Heart right ventricle (tissue), 16 donors: ENCODE measurements at regions of chr17 and their contacts with region 1.

Region 1: GRCh38 chr17:72120642-72121163 is at the start of gene SOX9:
- DNase-seq: peak; percentile 84 to 91
- ATAC-seq: peak; percentile 87 to 96 (median 91)
- H3K4me3 ChIP-seq: peak within 1 kb of the TSS; percentile 54 to 85 (median 72)
- H3K27ac ChIP-seq: peak within 1 kb of the TSS; percentile 77 to 94 (median 90)
- H3K4me1 ChIP-seq: peaks cover 3 to 54% (median 38%) of the 10 kb centered on the region in 9 donors
- H3K27me3 ChIP-seq: peaks cover 0 to 97% (median 80%) of the 10 kb centered on the region in 7 donors
- CTCF ChIP-seq: no peak
- total RNA-seq, gene SOX9: 7.9 to 25.7 (median 12.8) TPM

Region 2: DNA sequence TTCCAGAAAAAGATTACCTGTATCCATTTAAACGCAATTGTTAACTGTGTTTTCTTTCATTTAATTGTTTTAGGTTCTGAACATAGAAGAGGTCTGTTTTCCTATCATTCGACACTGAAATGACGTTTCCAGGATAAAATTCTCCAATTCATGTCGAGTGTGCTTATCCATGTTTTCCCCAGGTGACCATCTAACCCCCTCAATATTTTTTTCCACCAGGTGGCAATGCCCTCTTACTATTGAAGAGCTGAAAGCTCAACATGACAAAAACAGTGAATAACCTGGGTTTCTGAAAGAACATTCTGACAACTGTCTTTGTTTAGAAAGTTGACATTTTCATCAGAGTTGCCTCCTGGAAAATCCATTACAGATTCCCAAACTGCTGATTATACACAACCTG is 1002.7 kb before region 1 on chr17:
- intact Hi-C with region 1: loop called in 1 of 10 experiments (anchors 5 kb)
- DNase-seq: no peak
- ATAC-seq: no peak
- H3K4me3 ChIP-seq: no peak overlapping the region
- H3K27ac ChIP-seq: no peak overlapping the region
- H3K4me1 ChIP-seq: no peaks in the 10 kb centered on the region
- H3K27me3 ChIP-seq: peaks cover 0 to 5% (median 0%) of the 10 kb centered on the region in 7 donors
- CTCF ChIP-seq: peak; percentile 15 to 56 (median 45)

Region 3: GRCh38 chr17:71472809-71473789 is 647.6 kb before region 1 on chr17:
- intact Hi-C with region 1: loop called in 8 of 10 experiments (anchors 2 to 10 kb)
- DNase-seq: peak in 1 of 2 donors; percentile 6
- ATAC-seq: peak in 3 of 8 donors; percentile 34 to 78 (median 35)
- H3K4me3 ChIP-seq: no peak overlapping the region
- H3K27ac ChIP-seq: no peak overlapping the region
- H3K4me1 ChIP-seq: no peaks in the 10 kb centered on the region
- H3K27me3 ChIP-seq: peaks cover 0 to 13% (median 0%) of the 10 kb centered on the region in 7 donors
- CTCF ChIP-seq: peak; percentile 30 to 65 (median 56)

Region 4: DNA sequence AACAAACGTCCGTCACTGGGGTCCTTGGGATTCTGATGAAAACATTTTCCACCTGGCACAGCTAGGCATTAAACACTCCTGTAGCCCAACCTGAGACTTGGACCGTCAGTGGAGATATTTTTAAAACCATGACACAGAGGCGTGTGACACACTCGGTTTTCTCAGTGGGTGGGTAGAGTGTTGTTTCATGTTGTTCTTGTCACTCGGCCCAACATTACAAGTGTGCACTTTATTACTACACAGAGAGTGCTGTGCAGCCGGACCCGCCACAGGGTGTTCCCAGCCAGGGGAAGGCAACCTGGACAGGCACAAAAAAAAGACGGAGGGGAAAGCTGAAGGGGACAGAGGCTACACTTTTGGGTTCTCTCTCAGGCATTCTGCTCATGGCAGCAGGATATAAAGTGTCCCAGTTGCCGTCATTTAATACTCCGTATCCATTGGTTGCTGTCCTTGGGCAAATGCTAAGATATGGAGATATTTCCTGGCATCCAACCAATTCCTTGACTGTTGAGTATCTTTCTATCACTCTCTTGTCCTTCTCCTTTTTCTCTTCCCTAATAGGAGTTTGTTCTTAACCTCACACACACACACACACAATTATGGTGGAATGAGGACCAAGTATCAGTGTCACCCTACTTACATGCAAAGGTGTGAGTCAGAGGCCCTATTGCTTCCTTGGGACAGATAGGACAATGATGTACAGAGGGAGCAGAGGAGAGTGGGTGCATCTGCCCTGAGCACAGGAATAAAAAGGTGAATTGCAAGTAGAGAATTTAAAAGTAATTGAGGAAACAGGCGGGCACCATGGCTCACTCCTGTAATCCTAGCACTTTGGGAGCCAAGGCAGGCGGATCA is 154.0 kb before region 1 on chr17:
- intact Hi-C with region 1: loop called in 2 of 10 experiments (anchors 5 kb)
- DNase-seq: peak in 1 of 2 donors; percentile 28
- ATAC-seq: peak; percentile 38 to 96 (median 91)
- H3K4me3 ChIP-seq: no peak overlapping the region
- H3K27ac ChIP-seq: peak overlapping the region in 8 of 10 donors; percentile 10 to 68 (median 58)
- H3K4me1 ChIP-seq: peaks cover 0 to 22% (median 4%) of the 10 kb centered on the region in 9 donors
- H3K27me3 ChIP-seq: no peaks in the 10 kb centered on the region
- CTCF ChIP-seq: no peak

Region 5: DNA sequence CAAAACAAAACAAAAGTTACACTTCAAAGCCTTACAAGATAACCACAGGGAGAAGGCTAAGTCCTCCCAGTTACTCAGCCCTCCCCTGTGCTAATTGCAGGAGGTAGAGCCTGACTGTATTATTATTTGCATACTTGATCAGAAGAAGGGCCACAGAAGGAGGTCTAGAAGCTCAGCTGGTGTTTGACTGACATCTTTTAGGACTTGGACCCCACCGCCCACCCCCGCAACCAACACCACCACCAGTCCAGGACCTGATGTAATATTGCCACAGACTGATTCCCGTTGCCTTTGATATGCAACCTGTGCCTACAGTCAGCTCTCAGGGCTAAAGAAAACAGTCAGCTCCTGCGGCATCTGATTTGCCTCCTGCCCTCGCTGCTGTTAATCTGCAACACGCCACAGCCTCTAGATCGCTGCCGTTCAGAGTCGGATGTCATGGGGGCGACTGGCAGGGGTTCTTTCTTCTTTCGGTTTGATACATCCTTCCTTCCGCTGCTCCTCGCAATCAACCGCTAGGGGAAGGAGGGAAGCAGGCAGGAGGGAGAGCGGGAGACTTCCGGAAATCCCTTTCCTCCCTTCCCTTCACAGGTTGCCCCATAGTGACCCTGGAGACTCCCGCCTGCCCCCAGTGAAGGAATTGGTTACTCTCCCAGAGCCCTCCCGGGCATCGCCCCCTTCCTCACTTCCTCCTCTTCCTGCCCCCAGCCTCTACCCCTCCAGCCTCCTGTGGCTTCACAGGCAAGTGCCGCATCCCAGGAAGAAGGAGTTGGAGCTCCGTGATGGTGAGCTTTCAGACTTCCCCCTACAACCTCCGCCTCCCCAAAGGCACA is 90.4 kb before region 1 on chr17:
- intact Hi-C with region 1: no loop called
- DNase-seq: peak; percentile 14 to 15
- ATAC-seq: peak in 7 of 8 donors; percentile 41 to 93 (median 69)
- H3K4me3 ChIP-seq: peak overlapping the region in 9 of 10 donors; percentile 20 to 58 (median 52)
- H3K27ac ChIP-seq: peak overlapping the region in 1 of 10 donors; percentile 20
- H3K4me1 ChIP-seq: peaks cover 0 to 12% (median 0%) of the 10 kb centered on the region in 9 donors
- H3K27me3 ChIP-seq: peaks cover 0 to 17% (median 0%) of the 10 kb centered on the region in 7 donors
- CTCF ChIP-seq: peak in 7 of 9 donors; percentile 11 to 48 (median 38)

Region 6: DNA sequence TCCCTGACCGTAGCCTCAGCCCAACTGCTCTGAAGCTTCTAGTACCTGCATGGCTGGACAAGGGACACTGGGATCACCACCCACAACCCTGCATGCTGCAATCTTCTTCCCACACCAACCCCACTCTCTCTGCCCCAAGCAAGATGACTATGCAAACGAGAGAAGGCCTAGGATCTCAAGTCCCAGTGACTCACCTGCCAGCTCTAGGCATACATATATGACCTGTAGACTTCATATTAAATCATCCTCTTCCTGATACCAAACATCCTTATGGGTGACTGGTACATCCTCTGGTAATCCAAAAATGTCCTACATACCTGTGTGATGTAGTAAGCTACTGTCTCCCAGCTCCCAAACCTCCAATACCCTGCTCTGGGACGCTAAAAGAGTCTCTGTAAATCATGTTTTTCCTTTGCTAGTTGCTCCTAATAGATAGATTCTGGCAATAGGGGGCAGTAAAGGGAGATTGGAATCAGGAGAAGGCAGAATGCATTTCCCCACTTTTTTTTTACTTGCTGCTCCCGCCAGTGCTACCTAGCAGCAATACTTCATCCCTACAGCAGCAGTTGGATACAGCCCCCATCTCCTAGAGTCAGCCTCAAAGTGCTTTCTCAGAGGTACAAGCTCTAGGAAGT is 43.3 kb before region 1 on chr17:
- intact Hi-C with region 1: no loop called
- DNase-seq: no peak
- ATAC-seq: no peak
- H3K4me3 ChIP-seq: no peak overlapping the region
- H3K27ac ChIP-seq: no peak overlapping the region
- H3K4me1 ChIP-seq: no peaks in the 10 kb centered on the region
- H3K27me3 ChIP-seq: peaks cover 0 to 4% (median 0%) of the 10 kb centered on the region in 7 donors
- CTCF ChIP-seq: no peak

Region 7: GRCh38 chr17:72171703-72172667 is 51.3 kb after region 1 on chr17:
- intact Hi-C with region 1: loop called in 2 of 10 experiments (anchors 5 kb)
- DNase-seq: no peak
- ATAC-seq: peak; percentile 13 to 68 (median 54)
- H3K4me3 ChIP-seq: peak overlapping the region in 1 of 10 donors; percentile 2
- H3K27ac ChIP-seq: peak overlapping the region in 7 of 10 donors; percentile 23 to 67 (median 46)
- H3K4me1 ChIP-seq: peaks cover 0 to 22% (median 0%) of the 10 kb centered on the region in 9 donors
- H3K27me3 ChIP-seq: peaks cover 0 to 2% (median 0%) of the 10 kb centered on the region in 7 donors
- CTCF ChIP-seq: peak in 3 of 9 donors; percentile 31 to 35 (median 35)

Region 8: GRCh38 chr17:72297326-72298115 is 176.8 kb after region 1 on chr17:
- intact Hi-C with region 1: loop called in 1 of 10 experiments (anchors 10 kb)
- DNase-seq: peak; percentile 14 to 17
- ATAC-seq: peak; percentile 45 to 76 (median 66)
- H3K4me3 ChIP-seq: no peak overlapping the region
- H3K27ac ChIP-seq: no peak overlapping the region
- H3K4me1 ChIP-seq: peaks cover 0 to 22% (median 11%) of the 10 kb centered on the region in 9 donors
- H3K27me3 ChIP-seq: peaks cover 0 to 14% (median 0%) of the 10 kb centered on the region in 7 donors
- CTCF ChIP-seq: no peak

Region 9: DNA sequence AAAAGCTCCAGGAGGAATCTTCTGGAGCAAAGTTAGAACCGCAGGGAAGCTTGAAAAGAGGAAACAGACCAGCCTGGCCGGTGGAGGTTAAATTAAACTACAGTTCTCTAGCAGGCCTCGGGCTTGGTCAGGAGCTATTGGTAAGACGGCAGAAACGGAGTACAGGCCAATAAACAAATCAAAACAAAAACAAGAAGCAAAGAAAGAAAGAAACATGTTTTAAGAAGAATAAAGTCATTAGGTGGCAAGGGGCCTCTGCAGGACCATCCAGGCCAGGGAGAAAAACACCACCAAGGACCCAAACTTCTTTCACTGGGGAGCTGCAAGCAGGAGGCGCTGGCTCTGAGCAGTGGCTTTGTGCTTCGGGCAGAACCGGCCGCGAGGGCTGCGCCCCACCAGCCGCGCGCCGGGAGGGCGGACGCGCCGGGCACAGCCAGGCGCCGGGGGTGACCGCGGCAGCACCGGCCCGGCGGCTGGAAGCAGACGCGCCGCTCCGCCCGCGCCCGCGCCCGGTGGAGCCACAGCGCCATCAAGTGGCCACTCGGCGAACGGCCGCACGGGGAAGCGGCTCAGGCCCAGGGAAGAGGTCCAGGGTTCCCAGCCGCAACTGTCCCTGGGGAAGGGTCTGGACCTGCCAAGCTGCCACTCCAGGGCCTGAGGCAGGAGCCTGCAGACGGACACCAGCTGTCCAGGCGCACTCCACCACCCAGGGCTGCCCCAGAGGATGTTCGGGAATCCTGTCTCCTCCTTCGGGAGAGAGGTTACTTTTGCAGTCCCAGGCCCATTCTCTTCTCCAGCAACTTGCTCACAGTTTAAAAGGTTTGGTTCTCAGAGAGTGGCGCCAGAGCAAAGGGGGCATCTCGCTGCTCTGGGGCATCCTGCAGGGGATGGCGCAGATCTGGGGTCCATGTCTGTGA is 419.5 kb after region 1 on chr17:
- intact Hi-C with region 1: loop called in 5 of 10 experiments (anchors 5 to 10 kb)
- DNase-seq: peak; percentile 61 to 80
- ATAC-seq: peak; percentile 91 to 98 (median 94)
- H3K4me3 ChIP-seq: peak overlapping the region in 5 of 10 donors; percentile 21 to 30 (median 24)
- H3K27ac ChIP-seq: peak overlapping the region in 3 of 10 donors; percentile 31 to 63 (median 50)
- H3K4me1 ChIP-seq: peaks cover 0 to 10% (median 4%) of the 10 kb centered on the region in 9 donors
- H3K27me3 ChIP-seq: peaks cover 0 to 19% (median 12%) of the 10 kb centered on the region in 7 donors
- CTCF ChIP-seq: peak; percentile 79 to 98 (median 87)